Adrenal gland (tissue), 19 donors: ENCODE measurements at regions of chr5 and their contacts with region 1.

Region 1: GRCh38 chr5:178881073-178881472 is 14.6 kb upstream of the ZFP2 start:
- DNase-seq: no peak
- H3K4me3 ChIP-seq: no peak overlapping the region
- H3K27ac ChIP-seq: no peak overlapping the region
- H3K4me1 ChIP-seq: no peaks in the 10 kb centered on the region
- H3K27me3 ChIP-seq: no peaks in the 10 kb centered on the region
- CTCF ChIP-seq: no peak
- POLR2A ChIP-seq: no peak

Region 2: DNA sequence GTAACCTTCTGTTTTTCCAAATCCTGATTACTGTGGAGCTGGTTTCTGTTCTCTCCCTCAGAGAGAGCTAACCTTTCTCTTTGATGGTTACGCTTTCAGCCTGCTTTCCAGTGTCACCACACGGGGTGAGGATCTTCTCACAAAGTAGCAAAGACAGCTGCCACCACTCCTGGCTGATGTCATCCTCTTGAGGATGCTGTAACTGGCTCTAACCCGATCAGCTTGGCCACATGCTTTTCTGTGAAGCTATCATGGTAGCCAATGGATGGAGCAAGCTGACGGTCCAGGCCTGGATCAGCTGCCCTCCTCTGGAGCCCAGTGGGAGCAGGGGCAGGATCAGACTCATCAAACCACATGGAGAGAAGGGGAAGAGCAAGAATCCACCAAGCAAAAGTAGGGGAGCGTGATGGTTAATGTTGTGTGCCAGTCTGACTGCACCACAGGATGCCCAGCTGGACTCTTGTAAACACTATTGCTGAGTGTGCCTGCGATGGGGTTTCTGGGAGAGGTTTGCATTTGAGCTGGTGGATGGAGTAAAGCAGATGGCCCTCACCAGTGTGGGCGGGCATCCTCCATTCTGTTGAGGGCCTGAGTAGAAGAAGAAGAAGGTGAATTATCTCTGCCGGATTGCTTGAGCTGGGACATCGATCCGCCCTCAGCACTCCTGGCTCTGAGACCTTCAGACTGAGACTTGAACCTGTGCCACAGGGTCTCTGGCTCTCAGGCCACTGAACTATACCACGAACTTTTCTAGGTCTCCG is 123.8 kb before region 1 on chr5:
- intact Hi-C with region 1: no loop called
- DNase-seq: no peak
- H3K4me3 ChIP-seq: no peak overlapping the region
- H3K27ac ChIP-seq: no peak overlapping the region
- H3K4me1 ChIP-seq: no peaks in the 10 kb centered on the region
- H3K27me3 ChIP-seq: no peaks in the 10 kb centered on the region
- CTCF ChIP-seq: no peak
- POLR2A ChIP-seq: no peak

Region 3: GRCh38 chr5:179033004-179033580 is 152.0 kb after region 1 on chr5:
- intact Hi-C with region 1: loop called in 1 of 2 experiments (anchors 10 kb)
- DNase-seq: no peak
- H3K4me3 ChIP-seq: peak overlapping the region in 1 of 4 donors; percentile 13
- H3K27ac ChIP-seq: no peak overlapping the region
- H3K4me1 ChIP-seq: no peaks in the 10 kb centered on the region
- H3K27me3 ChIP-seq: no peaks in the 10 kb centered on the region
- CTCF ChIP-seq: no peak
- POLR2A ChIP-seq: no peak